ENCODE measurements at regions of chr9 and their contacts with region 1.

Region 1: GRCh38 chr9:99368341-99369323 is 146.6 kb downstream of the SEC61B start:
- DNase-seq: peak; percentile 65 to 81 (median 77)
- ATAC-seq: peak; percentile 92 to 93
- H3K4me3 ChIP-seq: peak overlapping the region; percentile 51
- H3K27ac ChIP-seq: peak overlapping the region; percentile 96
- H3K4me1 ChIP-seq: peaks cover 8% of the 10 kb centered on the region
- H3K27me3 ChIP-seq: no peaks in the 10 kb centered on the region

Region 2: GRCh38 chr9:98551511-98552286 is 816.9 kb before region 1 on chr9:
- intact Hi-C with region 1: no loop called
- DNase-seq: no peak
- ATAC-seq: no peak
- H3K4me3 ChIP-seq: no peak overlapping the region
- H3K27ac ChIP-seq: no peak overlapping the region
- H3K4me1 ChIP-seq: no peaks in the 10 kb centered on the region
- H3K27me3 ChIP-seq: no peaks in the 10 kb centered on the region

Region 3: DNA sequence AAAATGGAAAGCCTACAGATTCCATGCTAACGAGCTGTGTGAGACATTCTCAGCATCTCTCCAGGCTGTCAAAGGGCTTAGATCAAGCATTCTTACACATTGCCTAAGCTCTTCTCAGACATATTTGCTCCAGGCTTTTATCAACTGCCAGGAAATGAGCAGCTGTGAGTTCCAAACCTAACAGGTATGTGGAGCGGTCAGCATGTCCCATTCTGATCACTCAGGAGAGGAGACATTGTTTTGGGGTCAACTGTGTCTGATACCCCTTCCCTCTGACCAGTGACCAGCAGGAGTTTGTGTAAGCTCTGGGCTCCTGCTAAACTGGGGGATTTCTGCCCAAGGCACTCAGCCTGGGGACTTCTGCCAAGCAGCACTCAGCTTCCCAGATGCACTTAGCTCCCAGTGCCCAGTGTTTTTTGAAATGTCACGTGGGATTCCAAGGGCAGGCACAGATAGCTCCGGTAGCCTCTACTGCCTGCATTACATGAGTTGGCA is 82.5 kb after region 1 on chr9:
- intact Hi-C with region 1: loop called in 1 of 4 experiments (anchors 5 kb)
- DNase-seq: peak; percentile 46 to 52 (median 49)
- ATAC-seq: peak; percentile 92 to 95
- H3K4me3 ChIP-seq: no peak overlapping the region
- H3K27ac ChIP-seq: peak overlapping the region; percentile 83
- H3K4me1 ChIP-seq: no peaks in the 10 kb centered on the region
- H3K27me3 ChIP-seq: no peaks in the 10 kb centered on the region